ENCODE measurements at regions of chr7 and their contacts with region 1.

Region 1: GRCh38 chr7:15015545-15016326 is 113.2 kb upstream of the DGKB start:
- H3K4me3 ChIP-seq: peak overlapping the region; percentile 18
- H3K27ac ChIP-seq: no peak overlapping the region
- H3K4me1 ChIP-seq: no peaks in the 10 kb centered on the region
- CTCF ChIP-seq: no peak

Region 2: GRCh38 chr7:14457568-14458453 is 557.9 kb before region 1 on chr7:
- CTCF ChIA-PET with region 1: no interaction called
- POLR2A ChIA-PET with region 1: no interaction called
- H3K4me3 ChIP-seq: no peak overlapping the region
- H3K27ac ChIP-seq: no peak overlapping the region
- H3K4me1 ChIP-seq: no peaks in the 10 kb centered on the region
- CTCF ChIP-seq: no peak

Region 3: GRCh38 chr7:14717816-14718215 is 297.9 kb before region 1 on chr7:
- CTCF ChIA-PET with region 1: interaction called, 13 read pairs
- POLR2A ChIA-PET with region 1: no interaction called
- H3K4me3 ChIP-seq: no peak overlapping the region
- H3K27ac ChIP-seq: no peak overlapping the region
- H3K4me1 ChIP-seq: no peaks in the 10 kb centered on the region
- CTCF ChIP-seq: no peak

Region 4: GRCh38 chr7:14988941-14989340 is 26.8 kb before region 1 on chr7:
- CTCF ChIA-PET with region 1: no interaction called
- POLR2A ChIA-PET with region 1: no interaction called
- H3K4me3 ChIP-seq: no peak overlapping the region
- H3K27ac ChIP-seq: no peak overlapping the region
- H3K4me1 ChIP-seq: no peaks in the 10 kb centered on the region
- CTCF ChIP-seq: no peak

Region 5: DNA sequence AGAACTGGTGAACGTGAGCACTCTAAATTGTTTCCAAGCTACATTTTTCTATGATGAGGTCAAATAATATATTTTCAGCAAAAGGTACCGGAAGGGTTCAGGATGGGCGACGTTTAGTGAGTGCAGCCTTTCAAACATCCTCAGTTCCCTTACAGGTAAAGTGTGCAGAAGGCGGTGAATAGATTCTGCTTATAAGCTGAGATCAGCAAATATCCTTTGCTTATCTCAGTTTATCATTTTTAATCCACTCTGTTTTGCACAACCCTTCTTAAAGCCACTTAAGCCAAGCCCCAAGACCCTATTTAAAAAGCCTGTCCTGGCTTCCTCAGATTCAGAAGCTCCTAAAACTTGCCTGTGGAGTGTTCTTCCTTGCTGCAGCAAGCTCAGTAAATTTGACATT is 10.1 kb before region 1 on chr7:
- CTCF ChIA-PET with region 1: interaction called, 11 read pairs
- POLR2A ChIA-PET with region 1: no interaction called
- H3K4me3 ChIP-seq: no peak overlapping the region
- H3K27ac ChIP-seq: no peak overlapping the region
- H3K4me1 ChIP-seq: no peaks in the 10 kb centered on the region
- CTCF ChIP-seq: no peak